CD8-positive, alpha-beta T cell (primary cell): ENCODE measurements at regions of chr21 and their contacts with region 1.

Region 1: GRCh38 chr21:45981151-45982089 is at the start of gene COL6A1:
- DNase-seq: peak in 8 of 9 experiments; percentile 38 to 80 (median 70)
- ATAC-seq: peak; percentile 78
- H3K4me3 ChIP-seq: peak within 1 kb of the TSS; percentile 42 to 54
- H3K4me3 Mint-ChIP-seq: peak within 1 kb of the TSS; percentile 61
- H3K27ac ChIP-seq: no peak within 1 kb of the TSS
- H3K27ac Mint-ChIP-seq: no peak within 1 kb of the TSS
- H3K4me1 ChIP-seq: peaks cover 17% of the 10 kb centered on the region
- H3K4me1 Mint-ChIP-seq: peaks cover 6% of the 10 kb centered on the region
- H3K27me3 ChIP-seq: peaks cover 0 to 11% of the 10 kb centered on the region in 2 experiments
- H3K27me3 Mint-ChIP-seq: peaks cover 3% of the 10 kb centered on the region
- CTCF ChIP-seq: no peak
- total RNA-seq, gene COL6A1: 15.2 to 16.5 TPM

Region 2: GRCh38 chr21:45788637-45789506 is 192.5 kb before region 1 on chr21:
- CTCF ChIA-PET with region 1: no interaction called
- POLR2A ChIA-PET with region 1: no interaction called
- intact Hi-C with region 1: no loop called
- DNase-seq: no peak
- ATAC-seq: no peak
- H3K4me3 ChIP-seq: no peak overlapping the region
- H3K4me3 Mint-ChIP-seq: no peak overlapping the region
- H3K27ac ChIP-seq: no peak overlapping the region
- H3K27ac Mint-ChIP-seq: no peak overlapping the region
- H3K4me1 ChIP-seq: no peaks in the 10 kb centered on the region
- H3K4me1 Mint-ChIP-seq: no peaks in the 10 kb centered on the region
- H3K27me3 ChIP-seq: no peaks in the 10 kb centered on the region
- H3K27me3 Mint-ChIP-seq: peaks cover 2% of the 10 kb centered on the region
- CTCF ChIP-seq: no peak

Region 3: DNA sequence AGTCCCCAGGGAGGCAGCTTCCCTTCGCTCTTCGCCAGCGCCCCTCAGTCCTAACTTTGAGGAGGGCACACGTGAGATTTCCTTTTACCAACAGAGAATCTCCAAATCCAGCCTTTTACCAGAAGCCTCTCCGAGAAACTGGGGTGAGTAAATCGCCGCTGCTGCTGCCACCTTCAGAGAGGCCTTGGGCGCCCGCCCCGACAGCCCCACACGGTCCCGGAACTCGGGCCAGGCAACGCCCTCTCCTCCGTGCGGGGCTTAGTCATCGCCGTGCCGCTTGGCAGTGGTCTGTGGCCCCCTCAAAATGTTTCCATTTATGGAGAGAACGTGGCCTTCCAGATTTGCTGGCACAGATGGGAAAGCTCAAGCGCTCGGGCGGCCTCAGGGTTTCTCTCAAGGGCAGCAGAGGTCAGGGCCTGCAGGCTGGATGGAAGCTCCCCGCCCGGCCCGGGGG is 75.1 kb after region 1 on chr21:
- CTCF ChIA-PET with region 1: no interaction called
- POLR2A ChIA-PET with region 1: no interaction called
- intact Hi-C with region 1: loop called in 1 of 2 experiments (anchors 10 kb)
- DNase-seq: peak in 1 of 9 experiments; percentile 47
- ATAC-seq: peak; percentile 37
- H3K4me3 ChIP-seq: no peak overlapping the region
- H3K4me3 Mint-ChIP-seq: peak overlapping the region; percentile 22
- H3K27ac ChIP-seq: no peak overlapping the region
- H3K27ac Mint-ChIP-seq: no peak overlapping the region
- H3K4me1 ChIP-seq: peaks cover 25% of the 10 kb centered on the region
- H3K4me1 Mint-ChIP-seq: peaks cover 28% of the 10 kb centered on the region
- H3K27me3 ChIP-seq: peaks cover 0 to 11% of the 10 kb centered on the region in 2 experiments
- H3K27me3 Mint-ChIP-seq: peaks cover 11% of the 10 kb centered on the region
- CTCF ChIP-seq: no peak

Region 4: DNA sequence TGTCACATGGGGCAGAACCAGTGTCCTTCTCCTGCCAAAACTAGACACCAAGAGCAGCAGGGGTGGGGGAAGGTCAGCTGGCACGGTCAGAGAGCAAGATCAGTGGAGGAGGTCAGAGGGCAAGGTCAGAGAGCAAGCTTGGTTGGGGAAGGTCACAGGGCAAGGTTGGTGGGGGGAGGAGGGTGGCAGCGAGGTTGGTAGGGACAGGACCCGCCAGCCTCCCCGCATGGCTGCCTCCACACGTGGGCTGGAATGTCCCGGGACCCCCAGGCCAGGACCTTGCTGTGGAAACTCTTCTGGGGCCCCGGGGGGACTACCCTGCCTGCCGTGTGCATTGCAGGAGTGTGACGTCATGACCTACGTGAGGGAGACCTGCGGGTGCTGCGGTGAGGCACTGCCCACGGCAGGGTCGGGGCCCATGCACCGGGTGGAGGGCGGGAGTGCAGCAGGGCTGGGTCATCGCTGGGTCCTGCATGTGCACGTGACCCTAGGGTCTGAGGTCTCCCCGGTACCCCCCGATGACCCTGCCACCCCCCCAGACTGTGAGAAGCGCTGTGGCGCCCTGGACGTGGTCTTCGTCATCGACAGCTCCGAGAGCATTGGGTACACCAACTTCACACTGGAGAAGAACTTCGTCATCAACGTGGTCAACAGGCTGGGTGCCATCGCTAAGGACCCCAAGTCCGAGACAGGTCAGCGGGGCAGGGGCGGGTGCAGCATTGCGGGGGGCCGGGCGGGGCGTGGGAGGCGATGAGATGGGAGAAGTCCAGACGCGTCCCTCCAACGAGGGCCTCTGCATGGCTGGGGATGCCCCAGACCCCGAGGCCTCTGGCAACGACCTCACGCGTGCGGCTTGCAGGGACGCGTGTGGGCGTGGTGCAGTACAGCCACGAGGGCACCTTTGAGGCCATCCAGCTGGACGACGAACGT is 143.8 kb after region 1 on chr21:
- CTCF ChIA-PET with region 1: no interaction called
- POLR2A ChIA-PET with region 1: no interaction called
- intact Hi-C with region 1: no loop called
- DNase-seq: peak in 2 of 9 experiments; percentile 0 to 18
- ATAC-seq: no peak
- H3K4me3 ChIP-seq: no peak overlapping the region
- H3K4me3 Mint-ChIP-seq: no peak overlapping the region
- H3K27ac ChIP-seq: no peak overlapping the region
- H3K27ac Mint-ChIP-seq: no peak overlapping the region
- H3K4me1 ChIP-seq: no peaks in the 10 kb centered on the region
- H3K4me1 Mint-ChIP-seq: no peaks in the 10 kb centered on the region
- H3K27me3 ChIP-seq: no peaks in the 10 kb centered on the region
- H3K27me3 Mint-ChIP-seq: no peaks in the 10 kb centered on the region
- CTCF ChIP-seq: no peak